ENCODE measurements at regions of chr12 and their contacts with region 1.

Region 1: GRCh38 chr12:22686193-22686592 is 61.2 kb downstream of the ETNK1 start:
- DNase-seq: no peak
- H3K4me3 ChIP-seq: no peak overlapping the region
- H3K27ac ChIP-seq: no peak overlapping the region
- H3K4me1 ChIP-seq: no peaks in the 10 kb centered on the region
- CTCF ChIP-seq: no peak

Region 2: DNA sequence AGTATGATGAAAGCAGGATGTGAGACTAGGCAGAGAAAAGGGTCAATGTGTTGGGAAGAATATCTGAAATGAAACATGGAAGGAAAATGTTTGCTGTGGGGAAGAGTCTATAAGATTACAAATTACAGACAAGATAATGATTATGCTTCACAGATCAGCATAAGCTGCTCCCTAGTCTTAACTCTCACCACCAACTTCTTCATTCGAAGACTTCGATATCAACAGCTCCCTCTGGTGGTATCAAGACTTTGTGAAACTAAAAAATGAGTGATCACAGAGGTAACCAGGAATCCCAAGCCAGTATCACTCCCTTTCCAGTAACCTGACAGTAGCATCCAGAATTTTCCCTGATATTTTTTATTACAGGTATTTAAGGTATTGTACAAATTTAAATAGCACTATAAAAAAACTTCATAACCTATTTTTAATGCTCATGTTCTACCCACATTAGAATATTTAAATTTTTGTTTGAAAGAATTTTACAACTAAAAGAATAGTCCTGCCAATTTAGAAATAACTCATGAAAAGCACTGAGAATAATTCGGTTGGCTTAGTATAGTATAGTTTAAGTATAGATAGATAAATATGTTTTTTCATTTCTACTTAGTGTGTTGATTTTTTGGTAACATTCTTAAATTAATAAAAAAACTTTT is 226.2 kb before region 1 on chr12:
- CTCF ChIA-PET with region 1: no interaction called
- POLR2A ChIA-PET with region 1: no interaction called
- intact Hi-C with region 1: no loop called
- DNase-seq: peak; percentile 67
- H3K4me3 ChIP-seq: no peak overlapping the region
- H3K27ac ChIP-seq: no peak overlapping the region
- H3K4me1 ChIP-seq: no peaks in the 10 kb centered on the region
- CTCF ChIP-seq: peak; percentile 84

Region 3: GRCh38 chr12:22653075-22653474 is 33.1 kb before region 1 on chr12:
- CTCF ChIA-PET with region 1: no interaction called
- POLR2A ChIA-PET with region 1: interaction called, 11 read pairs
- intact Hi-C with region 1: no loop called
- DNase-seq: no peak
- H3K4me3 ChIP-seq: no peak overlapping the region
- H3K27ac ChIP-seq: no peak overlapping the region
- H3K4me1 ChIP-seq: no peaks in the 10 kb centered on the region
- CTCF ChIP-seq: no peak

Measured in OCI-LY7 (cell line).